Lower lobe of right lung (tissue), 2 donors: ENCODE measurements at regions of chr2 and their contacts with region 1.

Region 1: GRCh38 chr2:48233005-48233404 is 296.9 kb upstream of the STON1 start:
- DNase-seq: no peak
- ATAC-seq: no peak
- H3K4me3 ChIP-seq: no peak overlapping the region
- H3K27ac ChIP-seq: no peak overlapping the region
- H3K4me1 ChIP-seq: no peaks in the 10 kb centered on the region
- H3K27me3 ChIP-seq: no peaks in the 10 kb centered on the region
- CTCF ChIP-seq: no peak

Region 2: GRCh38 chr2:48508461-48509124 is 275.6 kb after region 1 on chr2:
- intact Hi-C with region 1: loop called (anchors 5 kb)
- DNase-seq: no peak
- ATAC-seq: peak; percentile 73 to 78
- H3K4me3 ChIP-seq: no peak overlapping the region
- H3K27ac ChIP-seq: peak overlapping the region; percentile 55
- H3K4me1 ChIP-seq: peaks cover 34% of the 10 kb centered on the region
- H3K27me3 ChIP-seq: no peaks in the 10 kb centered on the region
- CTCF ChIP-seq: no peak